ENCODE measurements at regions of chr5 and their contacts with region 1.

Region 1: GRCh38 chr5:67209142-67209771 is 12.7 kb upstream of the CD180 start:
- DNase-seq: peak; percentile 67
- H3K4me3 Mint-ChIP-seq: no peak overlapping the region
- H3K27ac Mint-ChIP-seq: peak overlapping the region; percentile 46
- H3K4me1 Mint-ChIP-seq: peaks cover 57% of the 10 kb centered on the region
- H3K27me3 Mint-ChIP-seq: no peaks in the 10 kb centered on the region

Region 2: DNA sequence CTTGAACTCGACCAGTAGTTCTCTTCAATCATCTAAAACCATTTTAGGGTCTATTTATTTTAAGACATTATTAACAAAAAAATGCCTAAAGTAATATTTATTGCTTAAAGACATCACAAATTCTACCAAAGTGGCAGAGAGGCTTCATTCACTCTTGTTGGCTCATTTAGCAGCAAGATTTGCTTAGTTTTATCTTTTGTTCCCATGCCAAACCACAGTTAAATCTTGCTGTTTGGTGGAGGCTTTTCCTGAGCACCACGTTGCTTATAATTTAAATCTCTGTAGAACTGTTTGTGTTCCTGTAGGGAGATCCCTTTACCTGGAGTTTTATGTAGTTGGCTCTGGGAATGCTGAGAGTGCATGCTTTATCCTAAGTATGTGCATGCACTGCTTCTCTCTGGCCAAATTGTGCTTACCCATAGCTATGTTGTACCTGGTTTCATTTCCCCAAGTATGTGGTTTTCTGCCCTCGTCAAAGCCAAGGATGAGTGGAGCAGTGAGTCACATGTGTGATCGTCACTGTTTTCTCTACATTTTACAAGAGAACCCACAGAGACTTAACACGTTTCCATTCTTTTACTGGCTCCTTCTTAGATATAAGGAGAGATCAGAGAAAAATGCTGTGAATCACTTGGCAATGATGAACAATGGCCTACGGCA is 655.2 kb before region 1 on chr5:
- CTCF ChIA-PET with region 1: no interaction called
- POLR2A ChIA-PET with region 1: no interaction called
- intact Hi-C with region 1: loop called (anchors 10 kb)
- DNase-seq: peak; percentile 62
- H3K4me3 Mint-ChIP-seq: no peak overlapping the region
- H3K27ac Mint-ChIP-seq: peak overlapping the region; percentile 44
- H3K4me1 Mint-ChIP-seq: peaks cover 19% of the 10 kb centered on the region
- H3K27me3 Mint-ChIP-seq: peaks cover 8% of the 10 kb centered on the region

Region 3: DNA sequence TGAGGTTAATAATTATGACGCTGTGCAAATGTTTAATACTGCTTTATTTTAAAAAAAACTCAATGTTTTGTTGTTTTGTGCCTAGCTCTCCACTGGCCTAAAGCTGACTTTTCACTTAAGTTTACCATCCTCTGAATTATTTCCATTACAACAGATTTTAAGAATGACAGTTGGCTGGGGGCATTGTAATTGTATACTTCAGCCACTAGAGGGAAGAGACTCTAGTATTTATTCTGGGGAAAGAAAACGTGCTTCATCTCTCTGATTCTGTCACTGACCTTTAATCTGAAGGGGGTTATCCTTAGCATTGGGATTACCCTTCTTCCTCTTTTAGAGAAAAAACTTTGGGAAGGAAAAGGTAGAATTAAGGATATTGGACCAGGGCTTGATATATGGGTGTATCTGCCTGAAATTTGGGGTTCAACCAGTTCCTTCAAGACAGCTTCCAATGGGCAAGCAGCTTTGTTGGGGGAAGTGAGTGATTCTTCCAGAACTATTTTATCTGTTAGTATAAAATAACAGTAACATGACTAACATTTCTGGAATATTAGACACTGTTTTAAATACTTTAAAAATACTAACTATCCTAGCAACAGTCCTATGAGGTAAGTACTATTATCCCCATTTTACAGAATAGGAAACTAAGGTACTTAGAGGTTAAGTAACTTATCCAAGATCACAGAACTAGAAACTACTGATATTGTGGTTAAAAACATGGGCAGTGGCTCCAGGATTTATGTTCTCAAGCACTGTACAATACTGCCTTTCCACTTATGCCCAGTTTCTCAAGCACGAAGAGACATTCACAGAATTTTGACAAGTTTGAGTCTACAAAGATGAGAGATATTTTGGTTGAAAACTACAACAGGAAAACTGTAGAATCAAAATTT is 221.1 kb before region 1 on chr5:
- CTCF ChIA-PET with region 1: interaction called, 12 read pairs
- POLR2A ChIA-PET with region 1: no interaction called
- intact Hi-C with region 1: loop called (anchors 1 kb)
- DNase-seq: no peak
- H3K4me3 Mint-ChIP-seq: no peak overlapping the region
- H3K27ac Mint-ChIP-seq: no peak overlapping the region
- H3K4me1 Mint-ChIP-seq: peaks cover 4% of the 10 kb centered on the region
- H3K27me3 Mint-ChIP-seq: no peaks in the 10 kb centered on the region

Region 4: DNA sequence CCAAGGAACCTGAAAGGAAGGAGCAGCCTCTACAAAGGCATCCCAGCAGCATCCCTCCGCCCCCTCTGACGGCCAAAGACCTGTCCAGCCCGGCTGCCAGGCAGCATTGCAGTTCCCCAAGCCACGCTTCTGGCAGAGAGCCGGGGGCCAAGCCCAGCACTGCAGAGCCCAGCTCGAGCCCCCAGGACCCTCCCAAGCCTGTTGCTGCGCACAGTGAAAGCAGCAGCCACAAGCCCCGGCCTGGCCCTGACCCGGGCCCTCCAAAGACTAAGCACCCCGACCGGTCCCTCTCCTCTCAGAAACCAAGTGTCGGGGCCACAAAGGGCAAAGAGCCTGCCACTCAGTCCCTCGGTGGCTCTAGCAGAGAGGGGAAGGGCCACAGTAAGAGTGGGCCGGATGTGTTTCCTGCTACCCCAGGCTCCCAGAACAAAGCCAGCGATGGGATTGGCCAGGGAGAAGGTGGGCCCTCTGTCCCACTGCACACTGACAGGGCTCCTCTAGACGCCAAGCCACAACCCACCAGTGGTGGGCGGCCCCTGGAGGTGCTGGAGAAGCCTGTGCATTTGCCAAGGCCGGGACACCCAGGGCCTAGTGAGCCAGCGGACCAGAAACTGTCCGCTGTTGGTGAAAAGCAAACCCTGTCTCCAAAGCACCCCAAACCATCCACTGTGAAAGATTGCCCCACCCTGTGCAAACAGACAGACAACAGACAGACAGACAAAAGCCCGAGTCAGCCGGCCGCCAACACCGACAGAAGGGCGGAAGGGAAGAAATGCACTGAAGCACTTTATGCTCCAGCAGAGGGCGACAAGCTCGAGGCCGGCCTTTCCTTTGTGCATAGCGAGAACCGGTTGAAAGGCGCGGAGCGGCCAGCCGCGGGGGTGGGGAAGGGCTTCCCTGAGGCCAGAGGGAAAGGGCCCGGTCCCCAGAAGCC is 43.5 kb before region 1 on chr5:
- CTCF ChIA-PET with region 1: interaction called, 363 read pairs
- POLR2A ChIA-PET with region 1: interaction called, 104 read pairs
- intact Hi-C with region 1: loop called (anchors 1 kb)
- DNase-seq: peak; percentile 89
- H3K4me3 Mint-ChIP-seq: peak overlapping the region; percentile 91
- H3K27ac Mint-ChIP-seq: peak overlapping the region; percentile 98
- H3K4me1 Mint-ChIP-seq: peaks cover 70% of the 10 kb centered on the region
- H3K27me3 Mint-ChIP-seq: no peaks in the 10 kb centered on the region

Region 5: DNA sequence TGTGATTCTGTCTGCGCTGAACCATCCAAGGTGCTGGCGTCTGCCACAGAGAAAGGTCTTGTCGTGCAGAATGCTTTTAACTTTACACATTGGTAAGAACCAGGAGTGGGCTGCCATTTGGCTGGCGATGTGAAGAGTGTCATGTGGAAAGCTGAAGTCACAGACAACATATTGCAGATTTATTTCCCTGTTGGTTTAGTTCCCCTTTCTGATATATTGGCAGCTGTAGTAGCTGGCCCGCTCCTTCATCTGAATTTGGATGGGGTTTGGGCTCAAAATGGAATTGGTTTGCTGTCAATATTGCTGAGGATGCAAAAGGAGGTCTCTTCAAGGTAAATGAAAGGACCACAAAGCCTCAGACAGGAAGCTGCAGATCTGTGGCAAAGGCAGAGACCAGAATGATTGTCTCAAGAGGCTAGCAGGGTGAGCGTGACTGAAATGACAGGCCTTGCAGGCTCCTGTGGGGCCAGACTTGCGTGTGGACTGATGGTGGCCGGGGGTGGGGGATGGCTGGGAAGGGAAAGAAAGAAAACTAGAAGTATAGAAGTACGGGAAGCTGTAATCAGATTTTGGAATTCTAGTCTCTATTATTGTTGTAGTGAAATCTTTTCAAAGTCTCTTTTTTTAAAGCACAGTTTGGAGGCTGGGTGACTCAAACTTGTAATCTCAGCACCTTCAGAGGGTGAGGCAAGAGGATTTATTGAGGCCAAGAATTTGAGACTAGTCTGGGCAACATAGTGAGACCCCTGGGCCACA is 12.4 kb after region 1 on chr5:
- CTCF ChIA-PET with region 1: interaction called, 13 read pairs
- POLR2A ChIA-PET with region 1: interaction called, 9 read pairs
- intact Hi-C with region 1: loop called (anchors 1 kb)
- DNase-seq: peak; percentile 80
- H3K4me3 Mint-ChIP-seq: peak overlapping the region; percentile 21
- H3K27ac Mint-ChIP-seq: peak overlapping the region; percentile 77
- H3K4me1 Mint-ChIP-seq: peaks cover 53% of the 10 kb centered on the region
- H3K27me3 Mint-ChIP-seq: no peaks in the 10 kb centered on the region

Region 6: DNA sequence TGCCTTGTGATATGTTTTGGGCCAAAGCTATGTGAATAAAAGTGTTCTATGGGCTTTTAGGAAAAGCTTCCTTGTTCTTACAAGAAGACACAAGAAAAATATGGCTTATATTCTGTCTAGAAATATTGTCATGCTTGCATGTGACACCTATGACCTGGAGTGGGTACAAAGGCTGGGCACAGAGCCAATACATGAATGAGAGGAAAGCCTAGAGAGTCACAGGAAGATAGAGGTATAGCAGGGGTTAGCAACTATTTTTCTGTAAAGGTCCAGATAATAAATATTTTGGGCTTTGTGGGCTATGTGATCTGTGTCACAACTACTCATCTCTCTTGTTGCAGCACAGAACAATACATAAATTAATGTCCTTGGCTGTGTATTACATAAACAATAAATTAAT is 184.0 kb after region 1 on chr5:
- CTCF ChIA-PET with region 1: no interaction called
- POLR2A ChIA-PET with region 1: no interaction called
- intact Hi-C with region 1: no loop called
- DNase-seq: no peak
- H3K4me3 Mint-ChIP-seq: no peak overlapping the region
- H3K27ac Mint-ChIP-seq: no peak overlapping the region
- H3K4me1 Mint-ChIP-seq: no peaks in the 10 kb centered on the region
- H3K27me3 Mint-ChIP-seq: no peaks in the 10 kb centered on the region